Esophagus muscularis mucosa (tissue), 4 donors: ENCODE measurements at regions of chrX and their contacts with region 1.

Region 1: DNA sequence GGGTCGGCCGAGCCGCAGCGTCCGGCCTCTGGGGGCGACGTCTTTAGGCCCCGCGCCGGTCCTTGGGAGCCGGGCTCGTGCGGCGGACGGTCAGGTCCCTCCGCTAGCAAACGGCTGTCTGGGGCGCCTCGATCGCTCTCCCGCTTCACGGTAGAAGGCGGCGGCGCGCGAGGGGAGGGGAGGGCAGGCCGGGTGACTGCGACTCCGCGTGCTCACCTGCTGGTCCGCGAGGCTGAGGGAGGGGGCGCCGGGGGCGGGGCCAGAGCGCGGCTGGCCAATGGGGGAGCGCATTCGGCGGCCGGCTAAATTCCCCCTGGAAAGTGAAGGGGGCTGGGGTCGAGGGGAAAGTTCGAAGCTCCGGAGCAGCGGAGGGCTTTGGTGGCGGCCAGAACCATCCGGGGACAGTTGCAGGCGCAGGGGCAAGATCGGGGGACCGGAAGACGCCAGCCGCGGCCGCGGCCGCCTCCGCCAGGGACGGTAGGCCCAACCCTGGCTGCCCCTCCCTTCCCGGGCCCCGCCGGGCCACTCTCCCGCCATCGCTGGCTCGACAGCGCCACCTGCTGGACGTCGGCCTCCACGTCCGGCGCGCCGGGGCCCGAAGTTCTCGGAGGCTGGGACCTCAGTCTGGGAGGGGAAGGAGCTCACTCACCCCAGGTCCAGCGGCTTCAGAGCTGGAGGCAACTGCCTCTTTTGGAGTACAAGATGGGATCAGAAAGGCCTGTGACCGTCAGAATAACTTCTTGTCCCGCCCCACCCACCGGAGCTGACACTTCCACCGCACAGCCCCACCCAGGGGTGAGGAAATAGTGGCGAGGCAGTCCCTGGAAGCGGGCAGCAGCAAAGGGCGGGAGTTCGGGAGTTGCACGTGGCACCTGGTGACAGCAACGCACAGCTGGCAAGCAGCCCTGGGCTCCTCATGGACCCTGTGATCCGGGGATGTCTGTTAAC is 49.9 kb downstream of the ELF4 start:
- DNase-seq: no peak
- H3K4me3 ChIP-seq: peak overlapping the region; percentile 55 to 62 (median 58)
- H3K27ac ChIP-seq: peak overlapping the region; percentile 66 to 75 (median 72)
- H3K4me1 ChIP-seq: peaks cover 0 to 31% (median 15%) of the 10 kb centered on the region in 4 donors
- H3K27me3 ChIP-seq: no peaks in the 10 kb centered on the region
- CTCF ChIP-seq: peak; percentile 82 to 90 (median 83)
- EP300 ChIP-seq: no peak
- POLR2A ChIP-seq: no peak

Region 2: GRCh38 chrX:129843459-129844306 is 216.7 kb before region 1 on chrX and contains the start of gene ZDHHC9:
- intact Hi-C with region 1: loop called (anchors 10 kb)
- DNase-seq: peak; percentile 96
- H3K4me3 ChIP-seq: peak within 1 kb of the TSS; percentile 68 to 81 (median 72)
- H3K27ac ChIP-seq: peak within 1 kb of the TSS; percentile 73 to 86 (median 79)
- H3K4me1 ChIP-seq: peaks cover 0 to 15% (median 11%) of the 10 kb centered on the region in 4 donors
- H3K27me3 ChIP-seq: no peaks in the 10 kb centered on the region
- CTCF ChIP-seq: peak in 1 of 3 experiments; percentile 8
- EP300 ChIP-seq: no peak
- POLR2A ChIP-seq: peak; percentile 21
- total RNA-seq, gene ZDHHC9: 4.2 to 19.7 (median 13.1) TPM

Region 3: GRCh38 chrX:129925305-129926092 is 134.9 kb before region 1 on chrX:
- intact Hi-C with region 1: loop called (anchors 2 kb)
- DNase-seq: no peak
- H3K4me3 ChIP-seq: no peak overlapping the region
- H3K27ac ChIP-seq: no peak overlapping the region
- H3K4me1 ChIP-seq: peaks cover 0 to 5% (median 2%) of the 10 kb centered on the region in 4 donors
- H3K27me3 ChIP-seq: no peaks in the 10 kb centered on the region
- CTCF ChIP-seq: peak; percentile 54 to 61 (median 58)
- EP300 ChIP-seq: no peak
- POLR2A ChIP-seq: no peak

Region 4: DNA sequence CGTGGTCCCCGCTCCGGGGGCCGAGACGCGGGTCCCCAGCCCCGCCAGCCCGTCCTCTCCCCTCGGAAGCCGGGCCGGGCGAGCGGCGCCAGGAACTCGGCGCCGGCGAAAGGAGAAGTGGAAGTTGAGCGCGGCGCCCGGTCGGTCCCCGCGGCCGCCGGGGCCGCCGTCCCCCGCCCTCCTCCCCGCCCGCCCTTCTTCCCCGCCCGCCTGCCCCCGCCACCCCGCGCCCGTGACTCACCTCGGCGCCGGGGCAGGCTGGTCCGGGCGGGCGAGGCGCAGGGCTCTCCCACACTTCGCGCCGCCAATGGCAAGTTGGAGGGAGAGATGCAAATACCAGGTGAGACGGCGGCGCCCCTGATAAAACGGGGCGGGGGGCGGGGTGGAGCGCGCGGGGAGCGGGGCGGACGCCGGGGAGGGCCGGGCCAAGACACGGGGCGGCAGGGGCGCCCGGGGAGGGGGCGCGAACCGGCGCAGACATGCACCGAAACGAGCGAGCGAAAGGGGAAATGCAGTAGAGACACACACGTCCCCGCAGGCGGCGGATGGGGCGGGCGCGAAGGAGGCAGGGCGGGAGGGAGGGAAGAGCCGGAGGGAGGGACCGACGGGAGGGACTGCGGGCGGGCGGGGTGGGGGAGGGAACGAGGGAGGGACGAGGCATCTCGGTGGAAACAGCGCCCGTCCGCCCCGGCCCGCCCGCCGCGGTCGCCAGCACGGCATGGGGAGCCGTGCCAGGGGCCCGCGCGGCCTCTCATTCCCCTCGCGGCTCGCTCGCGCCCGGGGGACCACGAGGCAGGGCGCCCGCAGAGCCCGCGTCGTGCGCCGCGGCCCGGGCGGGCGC is 50.2 kb after region 1 on chrX and contains the start of gene ELF4:
- intact Hi-C with region 1: no loop called
- DNase-seq: no peak
- H3K4me3 ChIP-seq: peak within 1 kb of the TSS; percentile 63 to 75 (median 69)
- H3K27ac ChIP-seq: peak within 1 kb of the TSS; percentile 82 to 89 (median 84)
- H3K4me1 ChIP-seq: peaks cover 0 to 28% (median 17%) of the 10 kb centered on the region in 4 donors
- H3K27me3 ChIP-seq: no peaks in the 10 kb centered on the region
- CTCF ChIP-seq: no peak
- EP300 ChIP-seq: no peak
- POLR2A ChIP-seq: no peak
- total RNA-seq, gene ELF4: 6.2 to 9.9 (median 9.4) TPM